MCF 10A (cell line): ENCODE measurements at regions of chr1 and their contacts with region 1.

Region 1: GRCh38 chr1:171595324-171595723 is 26.7 kb upstream of the MYOCOS start:
- DNase-seq: no peak
- H3K4me3 Mint-ChIP-seq: no peak overlapping the region
- H3K27ac Mint-ChIP-seq: no peak overlapping the region
- H3K4me1 Mint-ChIP-seq: peaks cover 6% of the 10 kb centered on the region
- H3K27me3 Mint-ChIP-seq: no peaks in the 10 kb centered on the region
- CTCF ChIP-seq: no peak

Region 2: DNA sequence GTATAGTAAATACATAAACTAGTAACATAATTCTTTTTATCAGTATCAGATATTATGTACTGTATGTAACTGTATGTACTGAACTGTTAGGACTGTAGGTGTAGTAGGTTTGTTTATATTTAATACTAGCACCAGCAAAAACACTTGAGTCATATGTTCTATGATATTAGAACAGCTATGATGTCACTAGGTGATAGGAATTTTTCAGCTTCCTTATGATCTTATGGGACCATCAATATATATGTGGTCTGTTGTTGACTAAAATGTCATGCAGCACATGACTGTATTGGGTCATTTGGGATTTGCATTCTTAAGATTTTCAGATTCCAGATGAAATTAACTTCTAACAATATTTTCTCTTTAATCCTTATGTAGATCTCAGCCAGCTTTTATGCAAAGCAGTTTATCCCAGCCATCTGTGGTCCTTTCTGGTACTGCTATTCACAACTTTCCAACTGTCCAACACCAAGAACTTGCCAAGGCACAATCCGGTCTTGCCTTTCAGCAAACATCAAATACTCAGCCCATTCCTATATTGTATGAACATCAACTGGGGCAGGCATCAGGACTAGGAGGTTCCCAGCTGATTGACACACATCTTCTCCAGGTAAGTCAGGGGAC is 11.6 kb before region 1 on chr1:
- CTCF ChIA-PET with region 1: interaction called, 10 read pairs
- POLR2A ChIA-PET with region 1: interaction called, 3 read pairs
- intact Hi-C with region 1: no loop called
- DNase-seq: no peak
- H3K4me3 Mint-ChIP-seq: no peak overlapping the region
- H3K27ac Mint-ChIP-seq: peak overlapping the region; percentile 78
- H3K4me1 Mint-ChIP-seq: peaks cover 6% of the 10 kb centered on the region
- H3K27me3 Mint-ChIP-seq: no peaks in the 10 kb centered on the region
- CTCF ChIP-seq: no peak